Sigmoid colon (tissue), 7 donors: ENCODE measurements at regions of chr14 and their contacts with region 1.

Region 1: GRCh38 chr14:89351516-89352404 is 65.3 kb downstream of the FOXN3 start:
- DNase-seq: no peak
- H3K4me3 ChIP-seq: peak overlapping the region in 3 of 4 donors; percentile 0 to 9 (median 7)
- H3K27ac ChIP-seq: peak overlapping the region; percentile 66 to 79 (median 72)
- H3K4me1 ChIP-seq: peaks cover 0 to 45% (median 36%) of the 10 kb centered on the region in 4 donors
- H3K27me3 ChIP-seq: no peaks in the 10 kb centered on the region
- CTCF ChIP-seq: no peak
- EP300 ChIP-seq: no peak
- POLR2A ChIP-seq: no peak

Region 2: DNA sequence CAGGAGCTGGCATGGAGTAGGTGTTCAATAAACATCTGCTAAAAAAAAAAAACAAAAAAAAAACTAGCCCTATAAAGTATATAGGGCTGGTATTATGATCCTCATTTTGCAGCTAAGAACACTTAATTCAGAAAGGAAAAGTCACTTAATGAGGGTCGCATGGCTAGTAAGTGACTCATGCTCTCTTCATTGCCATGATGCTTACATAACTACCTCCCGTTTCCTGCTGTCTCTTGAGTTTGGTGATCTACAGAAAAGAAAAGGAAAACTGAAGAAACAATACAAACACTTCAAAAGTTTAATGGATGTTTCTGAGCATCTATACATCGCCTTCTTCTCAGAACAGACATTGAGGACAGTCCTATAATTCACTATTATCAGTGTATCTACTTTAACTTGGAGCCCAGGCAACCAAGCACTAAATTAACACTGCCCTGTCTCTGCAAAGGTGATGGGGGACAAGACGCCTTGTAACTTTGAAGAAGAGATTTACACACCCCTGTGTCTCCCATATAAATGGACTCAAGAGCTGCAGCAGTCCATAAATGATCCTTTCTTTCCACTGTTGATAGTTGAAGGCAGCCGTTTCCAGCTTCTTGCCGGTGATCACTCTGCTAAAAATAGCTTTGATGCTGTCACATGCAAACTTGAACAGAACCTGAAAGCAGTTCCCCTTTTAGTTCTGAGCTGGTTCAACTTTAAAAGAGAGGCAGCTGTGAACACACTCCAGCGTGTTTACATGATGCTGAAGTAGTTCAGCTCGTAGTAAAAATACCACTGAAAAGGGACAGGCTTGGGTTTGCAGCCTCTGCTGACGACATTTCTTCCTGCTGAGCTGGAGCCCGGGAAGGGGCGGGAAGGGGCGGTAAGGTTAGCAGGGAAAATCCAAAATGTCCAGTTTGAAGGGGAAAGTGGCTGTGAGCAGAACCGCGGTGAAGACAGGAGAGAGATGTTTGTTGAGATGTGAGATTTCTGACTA is 48.0 kb before region 1 on chr14:
- intact Hi-C with region 1: loop called (anchors 5 kb)
- DNase-seq: peak; percentile 91
- H3K4me3 ChIP-seq: peak overlapping the region; percentile 1 to 28 (median 20)
- H3K27ac ChIP-seq: peak overlapping the region; percentile 87 to 95 (median 90)
- H3K4me1 ChIP-seq: peaks cover 0 to 53% (median 45%) of the 10 kb centered on the region in 4 donors
- H3K27me3 ChIP-seq: no peaks in the 10 kb centered on the region
- CTCF ChIP-seq: no peak
- EP300 ChIP-seq: peak; percentile 81 to 98 (median 86)
- POLR2A ChIP-seq: no peak

Region 3: GRCh38 chr14:89409961-89410360 is 58.2 kb after region 1 on chr14:
- intact Hi-C with region 1: loop called (anchors 5 kb)
- DNase-seq: peak; percentile 35
- H3K4me3 ChIP-seq: no peak overlapping the region
- H3K27ac ChIP-seq: peak overlapping the region in 3 of 4 donors; percentile 31 to 52 (median 40)
- H3K4me1 ChIP-seq: peaks cover 0 to 65% (median 55%) of the 10 kb centered on the region in 4 donors
- H3K27me3 ChIP-seq: no peaks in the 10 kb centered on the region
- CTCF ChIP-seq: no peak
- EP300 ChIP-seq: no peak
- POLR2A ChIP-seq: no peak

Region 4: GRCh38 chr14:89422952-89423345 is 71.2 kb after region 1 on chr14:
- intact Hi-C with region 1: no loop called
- DNase-seq: peak; percentile 28
- H3K4me3 ChIP-seq: no peak overlapping the region
- H3K27ac ChIP-seq: no peak overlapping the region
- H3K4me1 ChIP-seq: peaks cover 0 to 12% (median 8%) of the 10 kb centered on the region in 4 donors
- H3K27me3 ChIP-seq: no peaks in the 10 kb centered on the region
- CTCF ChIP-seq: no peak
- EP300 ChIP-seq: no peak
- POLR2A ChIP-seq: no peak

Region 5: DNA sequence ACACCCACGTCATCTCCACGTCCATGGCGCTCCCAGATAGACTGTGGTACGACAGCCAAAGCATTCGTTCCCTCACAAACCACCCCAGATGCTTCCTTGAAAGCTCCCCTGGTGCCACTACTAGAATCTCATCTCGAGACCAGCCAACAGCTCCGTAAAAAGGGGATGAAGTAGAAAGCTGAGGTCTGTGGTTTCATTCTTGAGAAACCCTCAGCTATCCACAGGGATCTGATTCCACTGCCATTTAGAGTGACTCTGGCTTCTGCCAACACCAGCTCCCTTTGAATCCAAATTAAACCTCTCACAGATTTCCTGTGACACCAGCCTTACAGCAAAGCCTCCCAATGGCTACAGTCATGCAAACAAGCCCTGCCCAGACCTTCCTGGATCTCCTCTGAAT is 83.7 kb after region 1 on chr14:
- intact Hi-C with region 1: no loop called
- DNase-seq: peak; percentile 13
- H3K4me3 ChIP-seq: no peak overlapping the region
- H3K27ac ChIP-seq: no peak overlapping the region
- H3K4me1 ChIP-seq: peaks cover 0 to 11% (median 9%) of the 10 kb centered on the region in 4 donors
- H3K27me3 ChIP-seq: no peaks in the 10 kb centered on the region
- CTCF ChIP-seq: no peak
- EP300 ChIP-seq: no peak
- POLR2A ChIP-seq: no peak